Ascending aorta (tissue), 2 donors: ENCODE measurements at regions of chr10 and their contacts with region 1.

Region 1: GRCh38 chr10:103859161-103860086 is 4.0 kb upstream of the SH3PXD2A start:
- DNase-seq: no peak
- H3K4me3 ChIP-seq: no peak overlapping the region
- H3K27ac ChIP-seq: no peak overlapping the region
- H3K4me1 ChIP-seq: peaks cover 0 to 2% of the 10 kb centered on the region in 2 donors
- H3K27me3 ChIP-seq: no peaks in the 10 kb centered on the region
- CTCF ChIP-seq: peak; percentile 64 to 81 (median 81)

Region 2: GRCh38 chr10:103712570-103713498 is 146.6 kb before region 1 on chr10:
- intact Hi-C with region 1: loop called (anchors 1 kb)
- DNase-seq: peak; percentile 33 to 90
- H3K4me3 ChIP-seq: no peak overlapping the region
- H3K27ac ChIP-seq: no peak overlapping the region
- H3K4me1 ChIP-seq: no peaks in the 10 kb centered on the region
- H3K27me3 ChIP-seq: no peaks in the 10 kb centered on the region
- CTCF ChIP-seq: peak; percentile 90 to 96 (median 94)

Region 3: DNA sequence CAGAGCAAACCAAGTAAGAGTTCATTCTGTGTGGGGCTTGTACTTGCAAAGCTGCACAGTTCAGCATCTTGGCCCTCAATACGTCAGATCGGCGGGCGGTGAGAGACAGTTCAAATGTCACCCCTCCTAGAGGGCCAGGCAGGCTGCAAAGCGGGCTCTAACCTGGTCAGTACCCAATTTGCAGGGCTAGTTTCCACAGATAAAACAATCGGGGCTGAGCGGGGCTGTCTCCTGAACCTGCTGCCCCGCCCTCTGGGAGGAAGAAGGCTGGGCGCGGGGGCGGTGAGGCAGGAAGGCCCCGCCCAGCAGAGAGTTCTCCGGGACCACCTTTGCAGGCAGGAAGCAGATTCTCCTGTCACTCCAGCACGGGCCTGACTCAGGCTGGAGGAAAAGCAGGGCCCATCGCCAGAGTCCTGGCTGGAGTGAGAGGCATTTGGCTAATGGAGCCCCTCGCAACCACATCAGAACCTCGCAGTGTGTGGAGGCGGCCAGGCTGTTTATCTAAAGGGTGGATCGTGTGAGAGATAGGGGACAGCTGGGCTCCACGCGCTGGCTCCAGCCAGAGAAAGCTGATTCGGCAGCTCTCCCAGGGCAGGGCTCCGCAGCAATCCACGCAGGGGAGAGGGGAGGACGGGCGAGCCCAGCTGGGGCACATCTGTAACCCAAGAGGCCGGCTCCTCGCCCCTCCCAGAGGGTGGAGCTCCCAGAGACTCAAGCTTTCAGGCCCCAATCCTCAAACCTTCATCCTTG is 87.2 kb before region 1 on chr10:
- intact Hi-C with region 1: loop called (anchors 5 kb)
- DNase-seq: peak; percentile 33 to 85
- H3K4me3 ChIP-seq: peak overlapping the region; percentile 50 to 62
- H3K27ac ChIP-seq: peak overlapping the region; percentile 74 to 79
- H3K4me1 ChIP-seq: peaks cover 0 to 15% of the 10 kb centered on the region in 2 donors
- H3K27me3 ChIP-seq: no peaks in the 10 kb centered on the region
- CTCF ChIP-seq: no peak